Heart right ventricle (tissue), 16 donors: ENCODE measurements at regions of chrX and their contacts with region 1.

Region 1: GRCh38 chrX:54639346-54640102 is 109.5 kb downstream of the GNL3L start:
- DNase-seq: peak; percentile 92 to 95
- ATAC-seq: peak; percentile 95 to 99 (median 98)
- H3K4me3 ChIP-seq: peak overlapping the region in 9 of 10 donors; percentile 23 to 59 (median 53)
- H3K27ac ChIP-seq: peak overlapping the region; percentile 78 to 94 (median 90)
- H3K4me1 ChIP-seq: peaks cover 0 to 16% (median 4%) of the 10 kb centered on the region in 9 donors
- H3K27me3 ChIP-seq: no peaks in the 10 kb centered on the region
- CTCF ChIP-seq: peak; percentile 41 to 77 (median 64)

Region 2: DNA sequence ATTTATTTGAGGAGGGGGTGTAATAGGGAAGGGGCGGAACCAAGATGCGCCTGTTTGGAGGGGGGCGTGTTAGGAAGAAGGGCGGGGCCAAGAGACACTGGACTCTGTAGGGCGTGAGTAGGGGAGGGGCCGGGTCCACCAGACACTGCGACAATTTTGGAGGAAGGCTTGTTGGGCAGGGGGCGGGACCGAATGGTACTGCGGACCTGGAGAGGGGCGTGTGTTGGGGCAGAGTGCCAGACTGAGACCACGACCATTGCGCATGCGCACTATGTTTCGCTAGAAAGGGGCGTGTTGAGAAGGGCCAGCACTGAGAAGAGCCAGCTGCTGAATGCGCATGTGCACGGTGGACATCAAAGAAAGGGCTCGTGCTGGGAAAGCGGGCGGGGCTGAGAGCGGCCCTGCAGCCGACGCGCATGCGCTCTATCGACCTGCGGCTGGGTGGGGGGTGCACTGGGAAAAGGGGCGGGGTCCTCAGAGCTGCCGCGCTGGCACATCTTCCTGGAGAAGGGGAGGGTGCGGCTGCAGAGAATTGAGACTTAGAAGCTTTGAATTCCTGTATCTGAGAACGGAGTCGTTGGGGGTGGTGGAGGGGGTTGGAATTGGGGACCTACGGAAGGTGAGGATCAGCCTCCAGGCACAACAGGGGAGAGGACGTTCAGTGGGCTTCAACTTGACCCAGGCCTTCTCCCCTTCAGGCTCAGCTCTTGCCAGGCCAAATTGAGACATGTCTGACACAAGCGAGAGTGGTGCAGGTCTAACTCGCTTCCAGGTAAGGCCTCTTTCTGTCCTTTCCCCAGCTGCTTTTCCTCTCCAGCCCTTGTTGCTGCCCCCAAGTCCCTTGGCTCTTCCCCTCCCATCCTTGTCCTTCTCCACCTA is 169.3 kb after region 1 on chrX:
- intact Hi-C with region 1: loop called in 3 of 10 experiments (anchors 5 to 10 kb)
- DNase-seq: peak; percentile 89 to 93
- ATAC-seq: peak; percentile 87 to 96 (median 93)
- H3K4me3 ChIP-seq: peak overlapping the region; percentile 47 to 84 (median 72)
- H3K27ac ChIP-seq: peak overlapping the region; percentile 65 to 94 (median 92)
- H3K4me1 ChIP-seq: peaks cover 0 to 16% (median 7%) of the 10 kb centered on the region in 9 donors
- H3K27me3 ChIP-seq: no peaks in the 10 kb centered on the region
- CTCF ChIP-seq: no peak

Region 3: GRCh38 chrX:55057675-55058249 is 418.2 kb after region 1 on chrX:
- intact Hi-C with region 1: loop called in 2 of 10 experiments (anchors 5 kb)
- DNase-seq: peak in 1 of 2 donors; percentile 7
- ATAC-seq: peak in 7 of 8 donors; percentile 51 to 79 (median 69)
- H3K4me3 ChIP-seq: peak overlapping the region in 5 of 10 donors; percentile 21 to 33 (median 31)
- H3K27ac ChIP-seq: no peak overlapping the region
- H3K4me1 ChIP-seq: peaks cover 0 to 5% (median 0%) of the 10 kb centered on the region in 9 donors
- H3K27me3 ChIP-seq: peaks cover 0 to 52% (median 0%) of the 10 kb centered on the region in 7 donors
- CTCF ChIP-seq: peak; percentile 50 to 80 (median 75)